Panc1 (cell line): ENCODE measurements at regions of chr12 and their contacts with region 1.

Region 1: GRCh38 chr12:79344855-79345847 is 345.6 kb downstream of the PAWR start:
- DNase-seq: peak; percentile 35
- ATAC-seq: peak; percentile 94
- H3K4me3 ChIP-seq: no peak overlapping the region
- H3K27ac ChIP-seq: no peak overlapping the region
- H3K4me1 ChIP-seq: no peaks in the 10 kb centered on the region
- H3K27me3 ChIP-seq: no peaks in the 10 kb centered on the region
- CTCF ChIP-seq: peak; percentile 88

Region 2: GRCh38 chr12:78181544-78182162 is 1163.5 kb before region 1 on chr12:
- CTCF ChIA-PET with region 1: no interaction called
- POLR2A ChIA-PET with region 1: no interaction called
- in situ Hi-C with region 1: no loop called
- intact Hi-C with region 1: loop called (anchors 1 kb)
- DNase-seq: no peak
- ATAC-seq: peak; percentile 82; the same call in 1 of the 2 replicates
- H3K4me3 ChIP-seq: no peak overlapping the region
- H3K27ac ChIP-seq: no peak overlapping the region
- H3K4me1 ChIP-seq: no peaks in the 10 kb centered on the region
- H3K27me3 ChIP-seq: no peaks in the 10 kb centered on the region
- CTCF ChIP-seq: peak; percentile 81; the same call in 1 of the 2 replicates

Region 3: DNA sequence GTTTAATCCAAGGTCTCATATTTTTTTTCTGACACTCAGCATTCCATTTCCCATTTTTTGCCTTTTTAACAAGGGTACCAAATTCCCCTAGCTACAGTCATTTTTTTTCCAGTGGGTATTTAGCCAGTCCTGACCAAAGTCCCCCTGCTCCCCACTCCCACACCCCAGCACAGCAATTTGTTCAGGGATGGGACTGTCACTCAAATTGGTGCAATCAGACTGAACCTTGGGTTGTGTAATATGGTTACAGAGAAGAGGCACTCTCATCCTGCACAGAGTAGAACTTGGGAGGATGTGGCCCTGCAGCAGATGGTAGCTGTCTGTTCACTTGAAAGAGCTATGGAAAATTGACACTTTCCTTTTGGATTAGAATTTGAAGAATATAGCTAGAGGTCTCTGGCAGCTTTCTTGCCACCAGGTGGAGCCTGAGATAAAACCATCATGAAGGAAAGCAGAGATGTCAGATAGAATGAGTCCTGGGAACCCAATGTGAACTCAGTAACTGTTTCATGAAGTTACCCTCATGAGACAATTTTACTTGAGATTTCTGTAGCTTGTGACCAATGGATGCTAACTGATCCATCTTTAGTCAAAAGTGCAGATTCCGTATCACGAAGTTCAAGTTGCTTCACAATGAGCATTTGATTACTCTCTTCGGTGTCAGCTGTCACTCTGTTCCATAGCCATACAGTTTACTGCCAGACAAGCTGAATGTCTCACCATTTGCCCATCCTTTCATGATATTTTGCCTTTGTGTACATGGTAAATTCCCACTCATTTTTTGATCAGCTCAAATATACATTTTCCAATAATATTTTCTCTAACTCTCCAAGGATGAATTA is 874.6 kb before region 1 on chr12:
- CTCF ChIA-PET with region 1: interaction called, 4 read pairs
- POLR2A ChIA-PET with region 1: no interaction called
- in situ Hi-C with region 1: no loop called
- intact Hi-C with region 1: loop called (anchors 10 kb)
- DNase-seq: peak; percentile 32
- ATAC-seq: peak; percentile 84
- H3K4me3 ChIP-seq: no peak overlapping the region
- H3K27ac ChIP-seq: no peak overlapping the region
- H3K4me1 ChIP-seq: no peaks in the 10 kb centered on the region
- H3K27me3 ChIP-seq: no peaks in the 10 kb centered on the region
- CTCF ChIP-seq: peak; percentile 74

Region 4: GRCh38 chr12:79127271-79127751 is 217.8 kb before region 1 on chr12:
- CTCF ChIA-PET with region 1: no interaction called
- POLR2A ChIA-PET with region 1: no interaction called
- in situ Hi-C with region 1: no loop called
- intact Hi-C with region 1: loop called (anchors 10 kb)
- DNase-seq: no peak
- ATAC-seq: no peak
- H3K4me3 ChIP-seq: no peak overlapping the region
- H3K27ac ChIP-seq: no peak overlapping the region
- H3K4me1 ChIP-seq: no peaks in the 10 kb centered on the region
- H3K27me3 ChIP-seq: no peaks in the 10 kb centered on the region
- CTCF ChIP-seq: no peak

Region 5: GRCh38 chr12:79162949-79163348 is 182.2 kb before region 1 on chr12:
- CTCF ChIA-PET with region 1: no interaction called
- POLR2A ChIA-PET with region 1: interaction called, 13 read pairs
- in situ Hi-C with region 1: no loop called
- intact Hi-C with region 1: no loop called
- DNase-seq: no peak
- ATAC-seq: no peak
- H3K4me3 ChIP-seq: no peak overlapping the region
- H3K27ac ChIP-seq: no peak overlapping the region
- H3K4me1 ChIP-seq: no peaks in the 10 kb centered on the region
- H3K27me3 ChIP-seq: no peaks in the 10 kb centered on the region
- CTCF ChIP-seq: no peak

Region 6: DNA sequence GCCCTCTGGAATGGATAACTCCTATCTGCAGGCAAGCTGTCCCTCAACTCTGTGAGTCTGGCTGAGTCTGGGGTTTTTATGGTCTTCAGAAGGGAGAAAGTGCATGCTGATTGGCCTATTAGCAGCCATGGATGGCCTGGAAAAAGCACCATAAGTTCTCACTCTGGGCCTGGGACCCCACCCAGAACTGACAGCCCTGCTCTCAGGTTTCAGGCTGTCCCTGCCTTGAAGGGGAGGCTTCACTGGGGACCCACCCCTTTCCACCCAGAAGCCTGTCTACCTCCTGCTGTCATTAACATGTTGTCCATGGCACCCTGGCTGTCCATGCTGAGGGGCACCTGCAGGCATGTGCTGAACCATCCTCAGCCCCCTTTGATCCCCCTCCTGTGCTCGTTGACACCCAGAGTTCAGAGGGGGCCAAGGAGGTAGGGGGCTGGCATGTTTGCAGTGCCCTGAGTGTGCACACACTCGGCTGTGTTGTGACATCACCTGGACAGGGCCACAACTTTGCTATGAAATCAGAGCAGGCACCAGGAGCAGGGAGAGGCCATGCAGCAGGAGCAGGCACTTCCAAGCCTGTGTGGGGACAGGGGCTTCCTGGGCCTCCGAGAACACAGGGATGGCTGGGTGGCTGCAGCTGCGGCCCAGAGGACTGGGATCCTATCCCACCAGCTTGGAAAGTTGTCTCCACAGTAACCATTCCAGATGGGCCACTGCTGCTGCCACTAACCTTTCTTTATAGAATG is 1817.4 kb after region 1 on chr12:
- CTCF ChIA-PET with region 1: no interaction called
- POLR2A ChIA-PET with region 1: no interaction called
- in situ Hi-C with region 1: no loop called
- intact Hi-C with region 1: no loop called
- DNase-seq: no peak
- ATAC-seq: no peak
- H3K4me3 ChIP-seq: no peak overlapping the region
- H3K27ac ChIP-seq: no peak overlapping the region
- H3K4me1 ChIP-seq: no peaks in the 10 kb centered on the region
- H3K27me3 ChIP-seq: no peaks in the 10 kb centered on the region
- CTCF ChIP-seq: no peak